ENCODE measurements at regions of chr15 and their contacts with region 1.

Region 1: GRCh38 chr15:67863442-67863987 is 23.7 kb upstream of the RNU6-1 start:
- DNase-seq: peak; percentile 79
- H3K4me3 Mint-ChIP-seq: no peak overlapping the region
- H3K27ac Mint-ChIP-seq: no peak overlapping the region
- H3K4me1 Mint-ChIP-seq: no peaks in the 10 kb centered on the region
- H3K27me3 Mint-ChIP-seq: peaks cover 63% of the 10 kb centered on the region

Region 2: GRCh38 chr15:67955252-67955651 is 91.7 kb after region 1 on chr15:
- CTCF ChIA-PET with region 1: no interaction called
- DNase-seq: no peak
- H3K4me3 Mint-ChIP-seq: no peak overlapping the region
- H3K27ac Mint-ChIP-seq: no peak overlapping the region
- H3K4me1 Mint-ChIP-seq: no peaks in the 10 kb centered on the region
- H3K27me3 Mint-ChIP-seq: peaks cover 28% of the 10 kb centered on the region

Region 3: GRCh38 chr15:68154923-68155559 is 291.5 kb after region 1 on chr15:
- CTCF ChIA-PET with region 1: interaction called, 27 read pairs
- DNase-seq: peak; percentile 24
- H3K4me3 Mint-ChIP-seq: no peak overlapping the region
- H3K27ac Mint-ChIP-seq: no peak overlapping the region
- H3K4me1 Mint-ChIP-seq: no peaks in the 10 kb centered on the region
- H3K27me3 Mint-ChIP-seq: no peaks in the 10 kb centered on the region

Region 4: DNA sequence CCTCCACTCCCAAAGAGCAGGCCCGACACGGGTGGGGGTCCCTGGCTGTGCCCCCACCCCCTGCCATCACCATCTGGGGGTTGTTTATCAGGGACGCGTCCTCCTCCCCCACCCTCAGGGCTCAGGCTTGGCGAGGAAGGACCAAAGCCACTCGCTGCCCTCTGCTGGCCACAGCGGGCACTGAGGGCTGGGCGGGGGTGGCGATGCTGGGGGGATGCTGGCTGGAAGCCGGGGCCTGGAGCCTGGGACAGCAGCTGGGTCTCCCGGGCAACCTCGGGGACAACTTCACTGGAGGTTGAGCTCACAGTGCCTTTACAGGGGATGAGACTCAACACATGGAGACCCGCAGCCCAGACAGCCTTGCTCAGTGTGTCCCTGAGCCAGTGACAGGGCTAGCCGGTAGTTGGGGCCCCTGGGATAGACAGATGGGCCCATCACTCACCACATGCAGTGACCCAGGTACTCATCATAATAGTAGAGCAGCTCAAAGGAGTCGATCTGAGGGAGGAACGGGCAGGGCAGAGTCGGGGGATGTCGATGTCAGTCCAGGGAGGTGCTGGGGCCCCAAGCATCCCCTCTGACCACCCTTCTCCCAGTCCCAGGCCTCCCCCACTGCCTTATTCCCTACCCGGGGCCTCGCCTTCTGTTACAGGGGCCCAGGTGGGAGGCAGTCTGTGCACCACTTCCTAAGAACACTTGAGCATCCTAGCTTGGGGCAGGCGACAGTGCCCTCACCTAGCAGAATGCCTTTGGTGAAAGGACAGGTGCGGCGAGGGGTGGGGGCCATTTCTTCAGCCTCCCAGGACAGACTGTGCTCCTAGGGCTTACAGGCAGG is 347.5 kb after region 1 on chr15:
- CTCF ChIA-PET with region 1: interaction called, 17 read pairs
- DNase-seq: peak; percentile 67
- H3K4me3 Mint-ChIP-seq: no peak overlapping the region
- H3K27ac Mint-ChIP-seq: peak overlapping the region; percentile 67
- H3K4me1 Mint-ChIP-seq: peaks cover 37% of the 10 kb centered on the region
- H3K27me3 Mint-ChIP-seq: no peaks in the 10 kb centered on the region